HEK293 (cell line): ENCODE measurements at regions of chr11 and their contacts with region 1.

Region 1: DNA sequence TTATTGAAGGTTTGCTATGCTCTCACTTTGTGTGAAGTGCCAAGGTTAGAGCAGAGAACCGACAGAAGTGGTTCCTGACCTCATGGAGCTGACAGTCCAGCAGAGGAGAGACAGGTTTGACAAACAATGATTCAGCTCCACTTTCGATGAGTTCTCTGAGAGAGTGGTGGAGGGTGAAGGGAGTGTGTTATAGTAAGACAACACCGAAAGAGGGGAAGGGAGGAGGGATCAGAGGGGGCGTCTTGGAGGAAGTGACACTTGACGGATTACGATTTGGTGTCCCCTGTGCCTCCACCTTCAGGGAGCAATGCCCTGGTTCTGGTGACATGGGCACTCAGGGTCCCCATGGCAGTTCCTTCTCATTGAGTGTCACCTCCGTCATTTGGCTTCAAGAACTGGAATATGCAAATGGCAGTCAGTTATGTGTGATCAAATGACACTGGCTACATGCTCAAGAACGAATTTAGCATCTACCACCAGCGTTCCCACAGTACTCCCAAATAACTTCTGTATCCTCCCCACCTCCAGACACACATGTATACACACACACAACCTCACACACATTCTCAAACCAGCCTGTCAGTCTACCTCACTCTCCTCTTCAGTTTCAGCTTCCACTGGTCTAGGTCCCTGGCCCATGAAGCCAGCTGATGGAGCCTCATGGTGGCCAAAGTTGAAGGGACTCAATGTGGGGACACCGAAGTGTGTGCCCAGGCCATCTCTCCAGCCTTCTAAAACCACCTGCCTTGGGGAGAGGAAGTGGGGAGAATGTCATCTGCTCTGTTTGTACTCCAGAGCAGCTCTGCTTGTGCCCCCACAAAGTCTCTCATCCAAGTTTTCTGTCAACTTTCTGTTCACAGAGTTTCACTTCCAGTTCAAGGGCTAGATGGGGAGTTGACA is 31.4 kb upstream of the NUP160 start:
- H3K4me3 ChIP-seq: no peak overlapping the region
- H3K27ac ChIP-seq: no peak overlapping the region
- H3K4me1 ChIP-seq: no peaks in the 10 kb centered on the region
- CTCF ChIP-seq: no peak

Region 2: GRCh38 chr11:47797633-47798032 is 81.9 kb before region 1 on chr11:
- CTCF ChIA-PET with region 1: interaction called, 10 read pairs
- POLR2A ChIA-PET with region 1: no interaction called
- H3K4me3 ChIP-seq: no peak overlapping the region
- H3K27ac ChIP-seq: no peak overlapping the region
- H3K4me1 ChIP-seq: no peaks in the 10 kb centered on the region
- CTCF ChIP-seq: no peak